ENCODE measurements at regions of chr11 and their contacts with region 1.

Region 1: DNA sequence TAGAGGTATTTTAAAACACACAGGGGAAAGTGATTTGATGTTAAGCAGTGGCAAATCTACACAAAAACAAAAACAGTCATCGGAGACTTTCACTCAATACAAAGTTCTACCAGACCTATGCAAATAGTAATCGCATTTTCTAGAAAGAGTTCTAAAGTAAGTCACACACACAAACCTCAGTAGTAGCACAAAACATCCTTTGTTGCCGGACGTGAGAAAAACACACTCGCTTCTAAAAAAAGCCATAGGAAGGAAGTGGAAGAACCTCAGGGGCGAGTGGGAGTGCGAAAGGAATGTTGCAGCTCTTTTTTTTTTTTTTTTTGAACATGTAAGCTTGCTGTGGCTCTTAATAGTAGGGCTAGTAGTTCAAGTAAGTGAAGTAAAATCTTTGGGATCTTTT is 88.9 kb downstream of the MAML2 start:
- DNase-seq: peak; percentile 33
- ATAC-seq: no peak
- H3K4me3 ChIP-seq: peak overlapping the region; percentile 7 to 53 (median 34)
- H3K4me3 Mint-ChIP-seq: peak overlapping the region; percentile 89
- H3K27ac ChIP-seq: peak overlapping the region; percentile 95 to 99
- H3K27ac Mint-ChIP-seq: peak overlapping the region; percentile 94
- H3K4me1 ChIP-seq: peaks cover 67 to 69% of the 10 kb centered on the region in 2 donors
- H3K4me1 Mint-ChIP-seq: peaks cover 82% of the 10 kb centered on the region
- H3K27me3 ChIP-seq: no peaks in the 10 kb centered on the region
- H3K27me3 Mint-ChIP-seq: no peaks in the 10 kb centered on the region
- CTCF ChIP-seq: no peak

Region 2: DNA sequence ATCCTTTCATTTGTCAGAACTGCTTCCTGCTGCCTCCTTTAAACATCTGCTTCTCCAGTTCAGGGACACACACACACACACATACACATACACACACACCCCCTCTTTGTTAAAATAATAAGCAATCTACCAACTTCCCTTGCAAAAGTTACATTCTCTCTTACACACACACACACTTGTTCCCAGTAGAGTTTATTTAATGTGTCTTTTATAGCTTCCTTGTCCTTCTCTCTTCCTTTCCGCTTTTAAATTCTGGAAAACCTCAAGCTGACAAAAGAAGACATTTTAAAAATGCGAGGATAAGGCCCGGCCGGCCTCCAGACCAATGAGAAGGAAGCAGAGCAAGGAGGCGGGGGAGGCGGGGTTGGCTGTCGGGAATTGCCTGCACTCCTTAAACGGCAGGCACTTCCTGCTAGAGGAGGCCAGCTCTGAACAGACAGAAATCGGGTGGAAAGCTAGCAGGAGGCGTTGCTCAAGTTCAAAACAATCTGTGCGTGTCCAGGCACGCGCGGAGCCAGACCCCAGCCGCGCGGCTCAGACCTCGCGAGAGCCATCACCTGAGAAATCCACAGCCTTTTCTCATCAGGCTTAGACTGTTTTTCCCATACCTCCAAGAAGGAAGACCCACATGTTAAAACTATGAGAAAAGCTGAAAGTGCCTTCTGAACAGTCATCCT is 11.0 kb before region 1 on chr11:
- CTCF ChIA-PET with region 1: interaction called, 26 read pairs
- POLR2A ChIA-PET with region 1: interaction called, 6 read pairs
- intact Hi-C with region 1: loop called (anchors 1 kb)
- DNase-seq: peak; percentile 82
- ATAC-seq: peak; percentile 81
- H3K4me3 ChIP-seq: peak overlapping the region; percentile 50 to 77 (median 62)
- H3K4me3 Mint-ChIP-seq: peak overlapping the region; percentile 93
- H3K27ac ChIP-seq: peak overlapping the region; percentile 72 to 84
- H3K27ac Mint-ChIP-seq: peak overlapping the region; percentile 96
- H3K4me1 ChIP-seq: peaks cover 36 to 37% of the 10 kb centered on the region in 2 donors
- H3K4me1 Mint-ChIP-seq: peaks cover 49% of the 10 kb centered on the region
- H3K27me3 ChIP-seq: no peaks in the 10 kb centered on the region
- H3K27me3 Mint-ChIP-seq: no peaks in the 10 kb centered on the region
- CTCF ChIP-seq: no peak

Region 3: DNA sequence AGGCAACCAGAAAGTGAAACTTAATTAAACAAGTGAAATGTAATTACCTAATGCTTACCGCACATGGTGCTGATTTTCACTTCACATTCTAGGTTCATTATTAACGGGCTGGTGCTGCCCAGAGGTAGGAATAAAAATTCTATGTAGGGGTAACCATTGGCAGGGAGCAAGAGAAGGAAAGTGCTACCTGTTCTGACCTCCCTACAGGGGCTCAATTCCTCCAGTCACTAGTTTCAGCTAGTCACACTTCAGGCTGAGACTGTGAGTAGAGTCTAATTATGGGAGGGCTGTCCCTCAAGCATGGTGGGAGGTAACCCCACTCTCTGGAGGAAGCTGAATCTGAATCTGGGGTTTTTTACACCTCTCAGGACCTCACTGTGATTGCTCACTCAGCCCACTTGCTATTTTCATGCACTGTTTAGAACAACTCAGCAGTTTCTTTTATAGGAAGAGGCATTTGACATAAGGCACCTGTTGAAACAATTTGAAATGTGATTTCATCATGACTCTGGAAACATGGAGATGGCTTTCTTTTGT is 13.5 kb after region 1 on chr11:
- CTCF ChIA-PET with region 1: interaction called, 7 read pairs
- POLR2A ChIA-PET with region 1: interaction called, 3 read pairs
- intact Hi-C with region 1: loop called (anchors 1 kb)
- DNase-seq: peak; percentile 73
- ATAC-seq: peak; percentile 94
- H3K4me3 ChIP-seq: peak overlapping the region in 4 of 5 experiments; percentile 2 to 47 (median 34)
- H3K4me3 Mint-ChIP-seq: peak overlapping the region; percentile 75
- H3K27ac ChIP-seq: peak overlapping the region; percentile 68 to 86
- H3K27ac Mint-ChIP-seq: peak overlapping the region; percentile 90
- H3K4me1 ChIP-seq: peaks cover 24 to 29% of the 10 kb centered on the region in 2 donors
- H3K4me1 Mint-ChIP-seq: peaks cover 53% of the 10 kb centered on the region
- H3K27me3 ChIP-seq: no peaks in the 10 kb centered on the region
- H3K27me3 Mint-ChIP-seq: no peaks in the 10 kb centered on the region
- CTCF ChIP-seq: no peak

Region 4: DNA sequence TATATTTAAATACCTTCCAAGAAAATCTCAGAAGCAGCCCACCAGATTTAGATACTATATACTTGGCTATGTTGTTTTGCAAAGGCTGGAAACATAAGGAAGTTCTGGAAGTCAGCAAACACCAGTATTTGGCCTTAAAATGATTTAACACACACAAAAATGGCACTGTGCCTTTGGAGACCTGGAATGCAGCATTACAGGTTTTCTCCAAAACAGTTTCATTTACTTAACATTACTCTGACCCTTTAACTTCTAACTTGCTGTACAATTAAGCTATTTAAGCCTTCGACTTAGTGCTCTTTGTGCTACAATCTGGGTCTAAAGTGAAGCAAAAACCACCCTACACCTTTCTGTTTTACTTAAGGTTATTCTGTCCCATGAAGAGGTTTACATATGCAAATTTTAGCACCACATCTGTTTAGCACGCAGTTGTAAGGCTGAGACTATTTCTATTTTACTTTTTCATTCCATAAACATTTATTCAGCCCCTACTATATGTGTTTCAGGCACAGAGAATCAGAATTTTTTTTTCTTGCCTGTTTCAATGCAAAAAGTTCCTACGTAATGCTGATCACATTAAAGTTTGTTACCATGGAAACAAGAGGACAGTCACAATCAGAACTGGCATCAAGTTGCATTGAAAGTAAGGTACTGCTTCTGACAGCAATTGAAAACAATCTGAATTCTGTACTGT is 18.6 kb after region 1 on chr11:
- CTCF ChIA-PET with region 1: interaction called, 7 read pairs
- POLR2A ChIA-PET with region 1: no interaction called
- intact Hi-C with region 1: loop called (anchors 1 kb)
- DNase-seq: peak; percentile 65
- ATAC-seq: peak; percentile 53
- H3K4me3 ChIP-seq: no peak overlapping the region
- H3K4me3 Mint-ChIP-seq: peak overlapping the region; percentile 36
- H3K27ac ChIP-seq: peak overlapping the region; percentile 44 to 81
- H3K27ac Mint-ChIP-seq: peak overlapping the region; percentile 18
- H3K4me1 ChIP-seq: peaks cover 18 to 22% of the 10 kb centered on the region in 2 donors
- H3K4me1 Mint-ChIP-seq: peaks cover 35% of the 10 kb centered on the region
- H3K27me3 ChIP-seq: no peaks in the 10 kb centered on the region
- H3K27me3 Mint-ChIP-seq: no peaks in the 10 kb centered on the region
- CTCF ChIP-seq: no peak

Region 5: GRCh38 chr11:96293598-96294021 is 39.5 kb after region 1 on chr11:
- CTCF ChIA-PET with region 1: no interaction called
- POLR2A ChIA-PET with region 1: no interaction called
- intact Hi-C with region 1: loop called (anchors 5 kb)
- DNase-seq: peak; percentile 51
- ATAC-seq: peak; percentile 80
- H3K4me3 ChIP-seq: peak overlapping the region in 1 of 5 experiments; percentile 35
- H3K4me3 Mint-ChIP-seq: peak overlapping the region; percentile 55
- H3K27ac ChIP-seq: peak overlapping the region in 1 of 2 donors; percentile 48
- H3K27ac Mint-ChIP-seq: peak overlapping the region; percentile 38
- H3K4me1 ChIP-seq: peaks cover 14 to 19% of the 10 kb centered on the region in 2 donors
- H3K4me1 Mint-ChIP-seq: peaks cover 36% of the 10 kb centered on the region
- H3K27me3 ChIP-seq: no peaks in the 10 kb centered on the region
- H3K27me3 Mint-ChIP-seq: no peaks in the 10 kb centered on the region
- CTCF ChIP-seq: no peak

Region 6: GRCh38 chr11:96306933-96307775 is 53.1 kb after region 1 on chr11:
- CTCF ChIA-PET with region 1: no interaction called
- POLR2A ChIA-PET with region 1: no interaction called
- intact Hi-C with region 1: no loop called
- DNase-seq: no peak
- ATAC-seq: no peak
- H3K4me3 ChIP-seq: no peak overlapping the region
- H3K4me3 Mint-ChIP-seq: peak overlapping the region; percentile 40
- H3K27ac ChIP-seq: no peak overlapping the region
- H3K27ac Mint-ChIP-seq: no peak overlapping the region
- H3K4me1 ChIP-seq: no peaks in the 10 kb centered on the region
- H3K4me1 Mint-ChIP-seq: peaks cover 41% of the 10 kb centered on the region
- H3K27me3 ChIP-seq: no peaks in the 10 kb centered on the region
- H3K27me3 Mint-ChIP-seq: no peaks in the 10 kb centered on the region
- CTCF ChIP-seq: no peak